HepG2 (cell line): ENCODE measurements at regions of chr20 and their contacts with region 1.

Region 1: DNA sequence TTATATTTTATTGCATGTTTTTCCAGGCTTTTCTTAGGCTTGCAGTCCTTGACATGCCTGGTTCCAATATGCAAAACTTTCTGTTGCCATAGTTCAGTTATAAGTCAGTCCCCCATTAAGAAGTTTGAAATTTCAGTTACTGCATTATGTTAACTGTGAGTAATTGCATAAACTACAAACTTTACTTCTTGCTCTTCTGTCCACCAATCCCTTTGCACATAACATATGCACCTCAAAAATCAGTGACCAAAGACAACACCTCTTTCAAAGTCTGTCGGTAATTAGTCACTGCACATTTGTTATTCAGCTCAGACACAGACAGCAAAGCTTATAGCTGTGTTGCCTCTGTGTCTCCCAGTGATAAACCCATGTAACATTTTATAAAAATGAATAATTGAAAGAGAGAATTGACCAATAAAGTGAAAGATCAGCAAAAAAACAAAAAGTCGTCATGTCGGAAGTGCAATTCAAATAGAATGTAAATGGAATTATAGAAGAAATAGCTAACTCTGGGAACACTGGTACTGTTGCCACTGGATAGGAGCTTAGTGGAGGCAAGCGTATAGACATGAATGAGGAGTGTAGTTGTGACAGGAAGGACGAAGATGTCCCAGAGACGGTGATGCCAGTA is 50.3 kb upstream of the BTBD3 start:
- DNase-seq: no peak
- ATAC-seq: no peak
- H3K4me3 ChIP-seq: no peak overlapping the region
- H3K27ac ChIP-seq: no peak overlapping the region
- H3K4me1 ChIP-seq: no peaks in the 10 kb centered on the region
- H3K27me3 ChIP-seq: no peaks in the 10 kb centered on the region
- CTCF ChIP-seq: no peak
- EP300 ChIP-seq: no peak
- POLR2A ChIP-seq: no peak
- RAD21 ChIP-seq: no peak

Region 2: DNA sequence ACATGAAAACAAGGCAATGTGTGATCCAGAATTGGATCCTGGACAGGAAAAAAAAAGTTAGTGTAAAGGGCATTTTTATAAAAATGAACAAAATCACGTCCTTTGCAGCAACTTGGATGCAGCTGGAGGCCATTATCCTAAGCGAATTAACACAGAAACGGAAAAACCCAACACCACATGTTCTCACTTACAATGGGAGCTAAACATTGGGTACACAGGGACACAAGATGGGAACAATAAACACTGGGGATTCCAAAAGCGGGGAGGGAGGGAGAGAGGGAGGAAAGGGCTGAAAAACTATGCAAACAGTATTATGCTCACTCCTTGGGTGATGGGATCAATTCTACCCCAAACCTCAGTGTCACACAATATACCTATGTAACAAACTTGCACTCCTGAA is 41.1 kb before region 1 on chr20:
- CTCF ChIA-PET with region 1: no interaction called
- POLR2A ChIA-PET with region 1: no interaction called
- in situ Hi-C with region 1: no loop called
- intact Hi-C with region 1: loop called (anchors 1 kb)
- DNase-seq: no peak
- ATAC-seq: no peak
- H3K4me3 ChIP-seq: no peak overlapping the region
- H3K27ac ChIP-seq: no peak overlapping the region
- H3K4me1 ChIP-seq: no peaks in the 10 kb centered on the region
- H3K27me3 ChIP-seq: no peaks in the 10 kb centered on the region
- CTCF ChIP-seq: no peak
- EP300 ChIP-seq: no peak
- POLR2A ChIP-seq: no peak
- RAD21 ChIP-seq: no peak

Region 3: GRCh38 chr20:11941593-11942246 is 74.3 kb after region 1 on chr20:
- CTCF ChIA-PET with region 1: no interaction called
- POLR2A ChIA-PET with region 1: no interaction called
- in situ Hi-C with region 1: no loop called
- intact Hi-C with region 1: no loop called
- DNase-seq: no peak
- ATAC-seq: no peak
- H3K4me3 ChIP-seq: no peak overlapping the region
- H3K27ac ChIP-seq: no peak overlapping the region
- H3K4me1 ChIP-seq: no peaks in the 10 kb centered on the region
- H3K27me3 ChIP-seq: no peaks in the 10 kb centered on the region
- CTCF ChIP-seq: no peak
- EP300 ChIP-seq: no peak
- POLR2A ChIP-seq: no peak
- RAD21 ChIP-seq: no peak